ENCODE measurements at regions of chr5 and their contacts with region 1.

Region 1: DNA sequence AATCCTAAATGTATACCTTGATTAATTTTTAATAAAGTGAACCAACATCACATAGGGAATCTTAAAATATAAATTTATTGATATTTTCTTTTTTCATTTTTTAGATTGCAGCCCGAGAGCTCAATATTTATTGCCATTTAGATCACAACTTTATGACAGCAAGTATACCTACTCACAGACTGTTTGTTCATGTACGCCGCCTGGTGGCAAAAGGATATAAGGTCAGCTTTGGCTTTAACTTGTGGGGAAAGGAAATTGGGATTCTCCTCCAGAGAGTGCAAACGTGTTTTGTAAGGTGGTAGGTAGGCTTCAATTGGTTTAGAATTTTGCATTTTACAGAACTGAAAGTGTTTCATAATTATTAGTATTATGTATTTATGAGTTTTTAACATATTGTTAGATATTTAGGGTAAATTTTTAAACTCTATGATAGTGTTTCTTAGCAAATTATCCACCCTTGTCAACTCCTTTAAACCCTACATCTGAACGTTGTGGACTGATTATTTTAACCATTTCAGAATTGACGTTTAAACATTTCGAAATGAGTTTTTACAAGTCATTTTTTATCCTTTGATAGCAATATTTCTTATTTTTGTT is 17.5 kb upstream of the DHFR start:
- DNase-seq: peak; percentile 83
- H3K4me3 ChIP-seq: no peak overlapping the region
- H3K27ac ChIP-seq: no peak overlapping the region
- H3K4me1 ChIP-seq: no peaks in the 10 kb centered on the region
- H3K27me3 ChIP-seq: no peaks in the 10 kb centered on the region
- CTCF ChIP-seq: peak; percentile 91

Region 2: GRCh38 chr5:80481019-80481893 is 191.0 kb before region 1 on chr5:
- CTCF ChIA-PET with region 1: interaction called, 11 read pairs
- POLR2A ChIA-PET with region 1: no interaction called
- intact Hi-C with region 1: loop called (anchors 5 kb)
- DNase-seq: peak; percentile 78
- H3K4me3 ChIP-seq: no peak overlapping the region
- H3K27ac ChIP-seq: no peak overlapping the region
- H3K4me1 ChIP-seq: no peaks in the 10 kb centered on the region
- H3K27me3 ChIP-seq: no peaks in the 10 kb centered on the region
- CTCF ChIP-seq: peak; percentile 90

Region 3: GRCh38 chr5:80487829-80488721 is 184.2 kb before region 1 on chr5 and contains the start of gene FAM151B:
- CTCF ChIA-PET with region 1: no interaction called
- POLR2A ChIA-PET with region 1: no interaction called
- intact Hi-C with region 1: loop called (anchors 5 kb)
- DNase-seq: peak; percentile 94
- H3K4me3 ChIP-seq: peak within 1 kb of the TSS; percentile 72
- H3K27ac ChIP-seq: peak within 1 kb of the TSS; percentile 64
- H3K4me1 ChIP-seq: no peaks in the 10 kb centered on the region
- H3K27me3 ChIP-seq: no peaks in the 10 kb centered on the region
- CTCF ChIP-seq: peak; percentile 32; the same call in 1 of the 2 replicates
- total RNA-seq, gene FAM151B: 4.0 and 4.3 TPM in 2 replicates

Measured in A673 (cell line).